ENCODE measurements at regions of chr18 and their contacts with region 1.

Region 1: GRCh38 chr18:11518788-11519685 is 90.4 kb upstream of the SLC35G4 start:
- DNase-seq: peak; percentile 54
- H3K4me3 ChIP-seq: peak overlapping the region in 1 of 2 experiments; percentile 30; a peak in 2 of 4 replicates
- H3K27ac ChIP-seq: no peak overlapping the region
- H3K4me1 ChIP-seq: no peaks in the 10 kb centered on the region
- H3K27me3 ChIP-seq: peaks cover 7% of the 10 kb centered on the region; the same call in 1 of the 2 replicates
- CTCF ChIP-seq: peak; percentile 82
- EP300 ChIP-seq: no peak
- RAD21 ChIP-seq: peak; percentile 54

Region 2: DNA sequence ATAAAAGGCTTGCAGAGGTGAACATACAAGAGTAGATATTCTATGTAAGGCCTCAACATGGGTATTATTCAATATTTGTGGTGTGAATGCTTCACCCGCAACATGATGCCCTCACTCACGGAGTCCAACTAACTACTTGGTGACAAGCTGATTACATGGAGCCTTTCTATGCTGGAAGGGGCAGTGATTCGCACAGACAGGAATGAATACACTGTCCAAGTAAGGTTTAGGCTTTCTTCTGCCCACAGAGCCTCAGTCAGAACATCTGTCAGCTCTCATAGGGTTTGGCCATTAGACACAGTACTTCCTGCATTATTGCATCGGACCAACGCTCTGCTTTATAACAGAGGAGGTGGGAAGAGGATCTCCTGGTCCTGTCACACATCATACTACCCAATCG is 10.0 kb after region 1 on chr18:
- CTCF ChIA-PET with region 1: interaction called, 14 read pairs
- POLR2A ChIA-PET with region 1: no interaction called
- DNase-seq: no peak
- H3K4me3 ChIP-seq: no peak overlapping the region
- H3K27ac ChIP-seq: no peak overlapping the region
- H3K4me1 ChIP-seq: no peaks in the 10 kb centered on the region
- H3K27me3 ChIP-seq: peaks cover 50% of the 10 kb centered on the region; the same call in 1 of the 2 replicates
- CTCF ChIP-seq: no peak
- EP300 ChIP-seq: no peak
- RAD21 ChIP-seq: no peak

Region 3: DNA sequence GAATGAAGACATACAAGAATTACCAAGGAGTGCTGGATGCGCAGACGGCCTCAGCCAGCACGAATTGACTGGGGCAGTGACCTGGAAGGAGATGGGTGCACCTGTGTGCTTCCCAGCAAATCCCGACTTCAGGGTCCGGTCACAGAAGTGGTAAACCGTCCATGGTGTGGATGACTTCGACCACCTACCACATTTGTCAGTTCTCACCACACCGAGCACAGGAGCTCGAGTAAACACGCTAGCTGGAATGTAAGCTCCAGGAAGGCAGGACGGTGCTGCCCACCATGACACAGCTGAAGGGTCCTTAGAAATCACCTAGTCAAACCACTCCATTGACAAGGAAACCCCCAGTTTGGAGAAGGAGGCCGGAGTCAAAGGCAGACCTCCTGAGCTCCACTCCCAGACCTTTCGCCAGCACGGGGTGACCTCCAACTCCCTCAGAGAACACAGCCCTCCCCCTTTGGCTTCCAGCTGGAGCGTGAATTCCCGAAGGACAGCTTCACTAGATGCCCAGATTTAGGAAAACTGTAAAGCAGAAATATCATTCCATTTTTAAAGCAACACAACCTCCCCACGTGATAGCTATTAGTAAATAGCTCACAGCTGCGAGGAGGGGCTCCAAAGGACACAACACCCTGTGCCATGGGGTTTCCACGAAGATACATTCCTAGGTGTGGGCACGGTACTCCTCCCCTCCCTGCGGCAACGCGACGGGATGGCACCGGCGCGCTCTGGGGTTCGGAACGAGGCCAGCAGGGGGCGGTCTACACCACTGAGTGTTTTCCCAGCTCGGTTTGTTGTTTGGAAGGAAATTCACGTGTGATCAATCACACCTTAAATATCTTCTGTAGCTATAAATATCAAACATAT is 135.9 kb after region 1 on chr18:
- CTCF ChIA-PET with region 1: no interaction called
- POLR2A ChIA-PET with region 1: no interaction called
- DNase-seq: peak; percentile 59
- H3K4me3 ChIP-seq: peak overlapping the region in 1 of 2 experiments; percentile 55; a peak in 1 of 4 replicates
- H3K27ac ChIP-seq: no peak overlapping the region
- H3K4me1 ChIP-seq: no peaks in the 10 kb centered on the region
- H3K27me3 ChIP-seq: peaks cover 51% of the 10 kb centered on the region
- CTCF ChIP-seq: peak; percentile 73
- EP300 ChIP-seq: no peak
- RAD21 ChIP-seq: peak; percentile 61